GM10248 (cell line): ENCODE measurements at regions of chr19 and their contacts with region 1.

Region 1: DNA sequence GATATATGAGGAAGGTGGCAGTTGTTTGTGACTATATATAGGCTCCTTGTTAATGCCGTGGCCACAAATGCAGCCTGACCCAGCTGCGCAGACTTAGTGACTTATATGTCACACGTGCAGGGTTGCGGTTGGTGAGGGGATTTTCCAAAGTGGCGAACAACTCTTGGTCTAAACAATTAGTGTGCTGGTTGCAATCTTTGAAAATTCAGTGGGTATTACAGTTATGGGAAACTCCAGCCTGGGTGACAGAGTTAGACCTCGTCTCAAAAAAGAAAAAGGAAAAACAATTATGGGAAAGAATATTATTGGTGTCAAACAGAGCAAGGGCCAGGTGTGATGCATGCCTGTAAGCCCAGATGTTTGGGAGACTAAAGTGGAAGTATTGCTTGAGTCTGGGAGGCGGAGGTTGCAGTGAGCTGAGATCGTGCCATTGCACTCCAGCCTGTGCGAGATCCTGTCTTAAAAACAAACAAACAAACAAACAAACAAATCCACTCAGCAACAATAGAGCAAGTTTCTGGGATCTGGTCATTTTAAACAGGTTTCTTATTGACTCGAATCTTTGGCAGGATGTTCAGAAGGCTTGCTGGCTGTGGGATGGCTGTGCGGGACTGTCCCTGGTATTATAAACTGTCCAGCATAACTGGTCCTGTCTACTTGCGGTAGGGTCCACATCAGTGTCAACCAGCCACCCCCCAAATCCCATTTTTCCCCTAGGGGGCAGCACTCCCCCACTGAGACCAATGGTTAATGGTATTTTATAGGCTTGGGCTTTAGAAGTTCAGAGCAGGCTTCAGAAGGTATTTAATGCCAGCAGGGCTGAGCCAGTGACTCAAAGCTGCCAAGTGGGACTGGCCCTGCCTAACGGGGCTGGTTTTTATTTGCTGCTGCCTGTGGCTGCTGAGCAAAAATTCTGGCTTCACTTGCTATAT is 15.4 kb downstream of the RELB start:
- DNase-seq: peak; percentile 83
- CTCF ChIP-seq: peak; percentile 67

Region 2: DNA sequence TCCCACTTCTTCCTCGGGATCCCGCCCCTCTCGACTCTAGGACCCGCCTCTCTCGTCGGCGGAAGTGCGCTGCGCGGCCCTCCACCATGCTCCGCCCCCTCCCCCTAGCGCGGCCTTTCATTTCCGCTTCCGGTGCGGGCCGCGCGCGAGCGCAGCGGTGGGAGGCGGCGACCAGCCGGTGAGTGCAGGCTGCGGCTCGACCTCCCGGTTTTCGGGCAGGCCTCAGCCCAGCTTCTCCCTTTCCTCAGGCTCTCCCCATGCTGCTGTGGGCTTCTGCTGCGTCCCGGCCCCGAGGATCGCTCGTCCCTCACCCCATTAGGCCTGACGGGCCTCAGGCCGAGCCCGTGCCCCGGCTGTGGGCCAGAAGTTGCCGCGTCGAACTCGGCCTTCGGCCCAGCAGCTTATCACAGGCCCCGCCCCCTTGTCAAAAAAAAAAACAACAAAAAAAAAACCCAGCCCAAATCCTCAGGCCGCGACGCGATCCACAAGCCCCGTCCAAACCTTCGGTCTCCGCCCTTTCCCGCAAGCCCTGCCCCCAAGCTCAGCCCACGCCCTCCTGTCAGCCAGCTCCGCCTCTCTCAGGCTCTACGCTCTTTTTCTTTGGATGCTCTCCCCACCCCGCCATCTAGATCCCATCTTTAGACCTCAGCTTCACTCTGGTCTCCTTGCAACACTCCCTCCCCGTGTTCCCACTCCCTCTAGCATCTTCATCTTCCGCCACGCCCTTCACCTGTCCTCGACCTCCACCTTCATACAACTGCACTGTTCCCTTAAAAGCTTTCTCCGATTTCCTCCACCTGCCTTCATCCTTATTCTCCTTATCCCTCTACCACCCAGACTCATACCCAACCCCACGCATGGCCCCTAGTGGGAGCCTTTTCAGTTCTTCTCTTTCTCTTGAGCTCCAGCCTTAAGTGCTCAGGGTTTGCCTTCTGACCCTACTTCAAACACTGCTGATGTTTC is 22.6 kb after region 1 on chr19 and contains the start of gene CLASRP:
- CTCF ChIA-PET with region 1: interaction called, 6 read pairs
- POLR2A ChIA-PET with region 1: interaction called, 15 read pairs
- DNase-seq: peak; percentile 93
- CTCF ChIP-seq: no peak

Region 3: DNA sequence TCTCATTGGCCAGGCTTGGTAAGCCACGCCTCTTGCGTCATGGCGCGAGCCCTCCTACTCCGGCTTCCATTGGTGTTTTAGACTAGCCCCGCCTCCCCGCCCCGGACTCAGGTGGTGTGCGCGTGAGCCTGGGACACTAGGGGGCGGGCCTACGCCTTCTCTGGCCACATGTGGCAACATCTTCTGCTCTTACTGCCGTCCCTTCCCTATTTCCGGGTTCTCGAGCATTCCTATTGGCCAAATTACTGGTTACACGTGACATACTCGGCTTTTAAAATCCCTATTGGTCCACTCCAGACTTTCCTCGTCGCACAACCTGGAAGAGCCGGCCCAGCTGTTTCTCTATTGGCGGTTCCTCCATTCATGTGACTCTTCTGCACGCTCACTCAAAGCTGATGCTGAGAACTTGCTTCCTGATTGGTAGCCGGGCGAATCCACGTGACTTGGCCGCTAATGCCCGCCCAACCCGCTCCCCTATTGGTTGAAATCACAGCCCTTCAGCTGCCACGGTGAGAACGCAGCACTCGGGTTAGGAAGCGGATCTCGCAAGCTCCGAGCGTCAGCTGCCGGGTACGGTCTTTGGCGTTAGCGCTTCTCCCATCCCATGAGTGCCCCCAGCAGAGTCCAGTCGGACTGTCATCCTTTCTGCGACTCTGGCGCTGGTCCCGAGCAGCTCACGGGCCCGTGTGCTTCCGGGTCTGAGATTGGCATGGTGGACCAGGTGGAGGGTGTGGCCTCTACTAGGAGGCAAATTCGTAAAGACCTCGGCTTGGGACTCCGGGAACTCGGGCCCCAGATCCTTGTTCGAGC is 161.8 kb after region 1 on chr19 and contains the start of gene BLOC1S3:
- CTCF ChIA-PET with region 1: no interaction called
- POLR2A ChIA-PET with region 1: no interaction called
- DNase-seq: peak; percentile 97
- CTCF ChIP-seq: peak; percentile 40